ENCODE measurements at regions of chr21 and their contacts with region 1.

Region 1: DNA sequence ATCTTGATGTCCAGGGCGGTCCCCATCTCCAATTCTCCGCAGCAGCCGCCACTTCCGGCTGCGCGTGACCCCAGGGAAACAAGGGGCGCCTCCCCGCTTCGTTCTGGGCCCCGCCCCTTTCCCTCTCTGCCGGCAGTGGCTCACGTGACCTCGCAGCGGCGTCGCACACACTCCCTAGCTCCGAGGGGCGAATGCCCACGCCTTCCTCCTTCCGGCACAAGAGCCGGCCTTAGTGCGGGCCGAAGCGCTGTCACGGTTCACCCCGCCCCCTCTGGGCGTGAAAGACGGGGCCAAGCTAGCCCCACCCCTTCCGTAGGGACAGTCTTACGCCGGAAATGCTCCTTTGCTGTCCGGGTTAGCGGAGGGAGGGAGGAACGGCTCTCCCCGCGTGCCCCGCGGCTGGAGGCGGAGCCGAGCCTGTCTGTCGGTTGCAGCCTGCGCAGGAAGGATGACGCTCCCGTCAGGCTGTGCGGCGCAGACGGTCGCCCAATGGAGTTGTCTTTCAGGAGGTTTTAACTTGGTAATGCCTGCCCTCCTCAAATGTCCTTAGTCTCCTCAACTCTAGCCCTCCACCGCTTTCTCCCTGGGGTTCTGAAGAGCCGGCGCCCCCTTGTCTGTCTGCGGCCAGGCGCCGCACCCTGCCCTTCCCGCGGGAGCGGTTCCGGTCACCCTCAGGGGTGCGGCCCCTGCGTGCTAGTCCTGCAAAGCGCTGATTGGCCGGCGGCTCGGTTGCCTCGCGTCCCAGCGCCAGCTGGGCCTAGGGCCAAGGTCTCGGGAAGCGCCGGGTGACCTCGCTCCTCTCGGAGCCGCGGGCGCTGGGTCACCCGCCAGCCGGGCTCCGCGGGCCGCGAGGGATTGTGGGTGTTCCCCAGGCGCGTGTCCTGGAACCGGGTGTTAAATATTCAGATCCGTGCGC is at the start of gene VPS26C:
- DNase-seq: peak; percentile 98
- H3K4me3 ChIP-seq: peak within 1 kb of the TSS; percentile 88 to 89
- H3K27ac ChIP-seq: peak within 1 kb of the TSS; percentile 95
- H3K4me1 ChIP-seq: peaks cover 12% of the 10 kb centered on the region
- H3K27me3 ChIP-seq: no peaks in the 10 kb centered on the region
- CTCF ChIP-seq: no peak
- POLR2A ChIP-seq: no peak
- total RNA-seq, gene VPS26C: 46.5 to 48.1 TPM

Region 2: GRCh38 chr21:37366482-37367316 is 99.2 kb after region 1 on chr21 and contains the start of gene DYRK1A:
- intact Hi-C with region 1: loop called (anchors 2 kb)
- DNase-seq: peak; percentile 98
- H3K4me3 ChIP-seq: peak within 1 kb of the TSS; percentile 96 to 99
- H3K27ac ChIP-seq: peak within 1 kb of the TSS; percentile 100
- H3K4me1 ChIP-seq: peaks cover 22% of the 10 kb centered on the region
- H3K27me3 ChIP-seq: no peaks in the 10 kb centered on the region
- CTCF ChIP-seq: no peak
- POLR2A ChIP-seq: no peak
- total RNA-seq, gene DYRK1A: 141 to 166 TPM

Measured in testis (tissue), 5 donors.